ENCODE measurements at regions of chr3 and their contacts with region 1.

Region 1: GRCh38 chr3:165103616-165104015 is 25.3 kb upstream of the SI start:
- DNase-seq: no peak
- H3K4me3 ChIP-seq: no peak overlapping the region
- H3K27ac ChIP-seq: no peak overlapping the region
- H3K4me1 ChIP-seq: no peaks in the 10 kb centered on the region
- H3K27me3 ChIP-seq: no peaks in the 10 kb centered on the region
- CTCF ChIP-seq: no peak
- EP300 ChIP-seq: no peak
- POLR2A ChIP-seq: no peak

Region 2: DNA sequence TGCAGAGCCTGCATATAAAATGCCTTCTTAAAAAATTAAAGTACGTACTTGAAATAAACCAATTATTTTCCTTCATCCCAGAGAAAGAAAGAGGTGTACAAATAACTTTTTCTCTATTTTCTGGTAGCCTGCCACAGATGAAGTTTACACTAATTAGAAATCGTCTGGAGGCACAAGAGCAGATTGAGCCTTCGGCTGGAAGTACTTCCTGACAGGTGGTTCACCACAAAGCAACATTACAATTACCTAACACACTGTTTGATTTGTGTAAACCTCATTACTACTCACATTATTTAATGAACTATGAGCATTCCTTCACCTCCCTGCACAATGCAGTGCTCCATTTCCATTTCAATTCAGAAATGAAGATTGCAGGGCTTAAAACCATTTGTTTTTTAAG is 881.4 kb before region 1 on chr3:
- intact Hi-C with region 1: loop called in 1 of 4 experiments (anchors 5 kb)
- DNase-seq: no peak
- H3K4me3 ChIP-seq: no peak overlapping the region
- H3K27ac ChIP-seq: no peak overlapping the region
- H3K4me1 ChIP-seq: no peaks in the 10 kb centered on the region
- H3K27me3 ChIP-seq: no peaks in the 10 kb centered on the region
- CTCF ChIP-seq: no peak
- EP300 ChIP-seq: no peak
- POLR2A ChIP-seq: no peak

Measured in ovary (tissue), 10 donors.